IMR-90 (cell line): ENCODE measurements at regions of chr16 and their contacts with region 1.

Region 1: GRCh38 chr16:4253394-4254150 is 11.7 kb upstream of the SRL start:
- DNase-seq: peak; percentile 99
- ATAC-seq: peak; percentile 98
- H3K4me3 ChIP-seq: peak overlapping the region; percentile 56
- H3K27ac ChIP-seq: peak overlapping the region; percentile 50
- H3K4me1 ChIP-seq: no peaks in the 10 kb centered on the region
- H3K27me3 ChIP-seq: no peaks in the 10 kb centered on the region
- CTCF ChIP-seq: no peak
- POLR2A ChIP-seq: peak; percentile 90
- RAD21 ChIP-seq: peak; percentile 99

Region 2: DNA sequence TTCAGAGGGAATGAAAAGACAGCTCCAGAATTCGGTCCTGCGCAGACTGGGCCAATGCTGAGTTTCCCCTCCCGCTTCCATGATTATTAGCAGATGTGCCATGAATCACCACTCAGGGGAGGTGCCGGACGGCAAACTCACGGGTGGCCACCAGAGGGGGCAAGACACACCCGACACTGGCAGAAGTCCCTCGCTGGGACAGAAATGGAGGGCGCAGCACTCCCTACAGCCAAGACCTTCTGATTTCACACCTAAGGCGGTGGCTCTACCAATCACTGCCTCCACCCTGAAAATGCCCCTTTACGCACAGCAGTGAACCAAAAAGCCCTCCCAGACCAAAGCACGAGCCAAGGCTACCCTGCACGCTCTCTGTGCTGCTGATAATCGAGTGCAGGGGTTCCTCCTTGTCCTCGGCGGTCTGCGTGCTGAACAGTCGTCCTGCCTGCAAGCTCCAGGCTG is 563.1 kb before region 1 on chr16:
- CTCF ChIA-PET with region 1: no interaction called
- POLR2A ChIA-PET with region 1: no interaction called
- dilution Hi-C with region 1: no loop called
- in situ Hi-C with region 1: no loop called
- intact Hi-C with region 1: loop called (anchors 10 kb)
- DNase-seq: peak; percentile 94
- ATAC-seq: peak; percentile 98
- H3K4me3 ChIP-seq: no peak overlapping the region
- H3K27ac ChIP-seq: no peak overlapping the region
- H3K4me1 ChIP-seq: peaks cover 6% of the 10 kb centered on the region
- H3K27me3 ChIP-seq: no peaks in the 10 kb centered on the region
- CTCF ChIP-seq: peak; percentile 96
- POLR2A ChIP-seq: no peak
- RAD21 ChIP-seq: peak; percentile 84

Region 3: GRCh38 chr16:3924763-3925162 is 328.8 kb before region 1 on chr16:
- CTCF ChIA-PET with region 1: no interaction called
- POLR2A ChIA-PET with region 1: no interaction called
- dilution Hi-C with region 1: no loop called
- in situ Hi-C with region 1: no loop called
- intact Hi-C with region 1: no loop called
- DNase-seq: no peak
- ATAC-seq: no peak
- H3K4me3 ChIP-seq: no peak overlapping the region
- H3K27ac ChIP-seq: no peak overlapping the region
- H3K4me1 ChIP-seq: no peaks in the 10 kb centered on the region
- H3K27me3 ChIP-seq: no peaks in the 10 kb centered on the region
- CTCF ChIP-seq: no peak
- POLR2A ChIP-seq: no peak
- RAD21 ChIP-seq: no peak

Region 4: GRCh38 chr16:3938848-3939624 is 314.5 kb before region 1 on chr16:
- CTCF ChIA-PET with region 1: no interaction called
- POLR2A ChIA-PET with region 1: no interaction called
- dilution Hi-C with region 1: no loop called
- in situ Hi-C with region 1: no loop called
- intact Hi-C with region 1: loop called (anchors 5 kb)
- DNase-seq: peak; percentile 89
- ATAC-seq: peak; percentile 91
- H3K4me3 ChIP-seq: no peak overlapping the region; the same call in none of the 2 replicates
- H3K27ac ChIP-seq: peak overlapping the region; percentile 73
- H3K4me1 ChIP-seq: peaks cover 15% of the 10 kb centered on the region
- H3K27me3 ChIP-seq: no peaks in the 10 kb centered on the region
- CTCF ChIP-seq: peak; percentile 81
- POLR2A ChIP-seq: no peak
- RAD21 ChIP-seq: peak; percentile 75

Region 5: DNA sequence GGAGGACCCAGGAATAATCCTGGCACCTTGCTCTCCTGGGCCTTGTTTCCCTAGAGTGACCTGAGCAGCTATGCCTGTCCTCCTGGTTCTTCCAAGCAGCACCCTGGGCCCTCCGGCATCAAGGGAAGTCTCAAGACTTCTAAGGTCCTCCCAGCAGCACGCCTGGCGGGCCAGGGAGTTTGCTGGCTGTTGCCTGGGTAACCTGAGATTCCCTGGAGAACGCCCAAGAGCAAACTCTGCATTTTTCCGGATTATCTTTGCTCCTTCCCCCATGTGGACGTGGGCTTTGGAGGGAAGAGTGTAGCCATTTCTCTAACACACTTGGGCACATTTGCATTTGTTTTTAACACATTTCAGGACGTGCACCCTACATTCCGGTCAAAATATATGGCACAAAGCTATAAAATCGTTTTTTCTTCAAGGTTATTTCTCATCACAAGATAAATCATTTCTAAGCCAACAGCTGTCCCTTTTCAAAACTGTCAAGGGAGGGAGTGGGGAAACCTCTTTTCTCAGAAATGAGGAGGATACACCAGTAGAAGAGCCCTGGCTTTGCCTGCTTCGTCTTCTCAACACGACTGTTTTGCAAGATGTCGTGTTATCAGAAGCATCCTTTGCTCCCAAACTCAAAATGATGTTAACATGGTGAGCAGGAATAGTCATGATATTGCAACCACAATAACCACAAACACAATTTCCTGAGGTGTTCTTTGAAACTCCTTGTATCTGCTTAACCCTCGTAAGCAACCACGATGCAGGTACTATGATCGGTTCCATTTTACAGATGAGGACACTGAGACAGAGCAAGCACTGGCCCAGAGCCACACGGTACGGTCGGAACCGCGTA is 253.9 kb before region 1 on chr16:
- CTCF ChIA-PET with region 1: no interaction called
- POLR2A ChIA-PET with region 1: no interaction called
- dilution Hi-C with region 1: no loop called
- in situ Hi-C with region 1: no loop called
- intact Hi-C with region 1: loop called (anchors 5 kb)
- DNase-seq: peak; percentile 81
- ATAC-seq: peak; percentile 91
- H3K4me3 ChIP-seq: no peak overlapping the region
- H3K27ac ChIP-seq: peak overlapping the region; percentile 90; the same call in 1 of the 2 replicates
- H3K4me1 ChIP-seq: peaks cover 19% of the 10 kb centered on the region
- H3K27me3 ChIP-seq: no peaks in the 10 kb centered on the region
- CTCF ChIP-seq: no peak
- POLR2A ChIP-seq: no peak
- RAD21 ChIP-seq: 0 out of 2 replicates have a peak, but pooled peaks have one; percentile 15

Region 6: DNA sequence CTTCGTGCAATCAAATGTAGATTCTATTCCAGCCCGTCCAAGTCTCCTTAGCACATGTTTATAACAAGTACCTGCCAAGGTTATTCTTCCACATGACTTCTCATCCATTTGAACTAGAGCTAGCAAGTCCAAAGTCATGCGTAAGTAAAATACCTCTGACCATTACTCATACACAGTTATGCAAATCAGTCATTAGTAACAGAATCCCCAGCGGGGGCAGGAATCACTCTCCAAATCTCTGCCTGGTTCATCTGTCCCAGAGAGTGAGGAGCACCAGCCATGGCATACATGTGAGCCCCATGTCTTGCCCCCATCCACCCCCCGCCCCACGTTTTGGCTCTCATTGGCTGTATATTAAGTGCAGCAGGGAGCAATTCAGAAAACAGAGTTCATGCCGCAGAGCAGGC is 39.4 kb before region 1 on chr16:
- CTCF ChIA-PET with region 1: interaction called, 12 read pairs
- POLR2A ChIA-PET with region 1: interaction called, 3 read pairs
- dilution Hi-C with region 1: no loop called
- in situ Hi-C with region 1: no loop called
- intact Hi-C with region 1: no loop called
- DNase-seq: peak; percentile 96
- ATAC-seq: peak; percentile 88
- H3K4me3 ChIP-seq: no peak overlapping the region
- H3K27ac ChIP-seq: peak overlapping the region; percentile 90
- H3K4me1 ChIP-seq: peaks cover 30% of the 10 kb centered on the region
- H3K27me3 ChIP-seq: no peaks in the 10 kb centered on the region
- CTCF ChIP-seq: no peak
- POLR2A ChIP-seq: no peak
- RAD21 ChIP-seq: no peak